ENCODE measurements at regions of chr1 and their contacts with region 1.

Region 1: DNA sequence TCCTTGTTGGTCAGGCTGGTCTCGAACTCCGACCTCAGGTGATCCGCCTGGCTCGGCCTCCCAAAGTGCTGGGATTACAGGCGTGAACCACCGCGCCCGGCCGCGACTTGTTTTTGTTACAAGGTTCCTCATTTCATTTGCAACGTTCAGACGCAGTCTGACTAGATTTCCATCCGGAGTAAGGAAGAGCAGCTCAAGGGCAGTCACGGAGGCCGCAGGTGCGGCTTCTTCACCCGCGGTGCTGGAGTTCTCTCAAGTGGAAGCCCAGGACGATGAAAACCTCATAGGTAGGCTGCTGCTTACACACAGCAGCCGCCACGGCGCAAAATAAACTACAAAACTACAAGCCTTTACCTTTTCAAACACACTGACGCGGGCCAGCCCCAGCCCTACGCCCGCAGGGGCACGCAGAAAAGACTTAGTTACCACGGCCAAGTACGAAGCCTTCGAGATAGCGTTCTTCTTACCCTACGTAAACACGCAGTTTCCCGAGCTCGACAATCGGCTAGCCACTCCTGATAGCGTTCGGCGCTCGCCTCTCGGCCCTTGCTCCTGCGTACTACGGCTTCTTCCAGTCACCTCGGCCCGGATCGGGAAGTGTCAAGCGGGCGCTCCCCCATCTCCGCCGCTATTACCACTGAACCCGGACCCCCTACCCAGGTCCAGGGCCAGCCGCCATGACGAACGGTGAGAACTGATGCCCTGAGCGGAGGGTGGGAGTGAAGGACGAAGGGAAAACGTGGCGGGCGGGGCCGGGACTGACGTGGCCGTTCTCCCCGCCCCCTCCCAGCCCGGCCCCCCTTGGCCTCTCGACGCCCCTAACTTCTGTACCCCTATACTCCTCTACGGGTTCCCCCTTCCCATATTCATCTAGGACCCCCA is at the start of gene TMEM167B:
- DNase-seq: peak; percentile 95
- H3K4me3 Mint-ChIP-seq: peak within 1 kb of the TSS; percentile 82
- H3K27ac Mint-ChIP-seq: peak within 1 kb of the TSS; percentile 87
- H3K4me1 Mint-ChIP-seq: peaks cover 29% of the 10 kb centered on the region
- H3K27me3 Mint-ChIP-seq: no peaks in the 10 kb centered on the region
- total RNA-seq, gene TMEM167B: 35.0 to 37.6 TPM

Region 2: DNA sequence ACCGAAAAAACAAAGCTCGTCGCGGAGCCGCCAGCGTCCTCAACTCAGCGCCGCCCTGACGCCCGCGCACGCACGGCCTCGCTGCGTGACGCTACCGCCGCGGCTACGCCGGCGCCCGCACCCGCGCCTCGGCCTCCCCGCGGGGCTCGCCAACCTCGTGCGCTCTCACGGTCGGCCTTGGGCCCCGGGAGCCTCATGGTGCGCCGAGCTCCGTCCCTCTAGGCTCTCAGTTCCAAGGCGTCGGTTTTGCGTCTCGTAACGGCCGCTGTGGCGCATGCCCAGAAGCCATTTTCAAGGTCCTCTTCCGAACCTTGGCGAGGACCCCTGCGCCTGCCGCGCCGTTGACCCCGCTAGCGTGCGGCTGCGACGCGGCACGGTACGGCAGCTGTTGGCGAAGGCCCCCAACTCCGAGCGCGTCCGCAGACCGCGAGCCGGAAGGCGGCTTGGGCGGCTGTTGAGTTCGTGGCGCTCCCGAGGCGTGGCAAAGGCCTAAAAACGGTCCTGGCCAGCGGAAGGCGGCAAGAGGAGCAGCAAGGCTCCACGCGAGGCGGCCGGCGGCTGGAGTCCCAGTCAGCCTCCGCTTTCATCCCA is 429.3 kb before region 1 on chr1 and contains the start of gene HENMT1:
- CTCF ChIA-PET with region 1: no interaction called
- intact Hi-C with region 1: loop called (anchors 5 kb)
- DNase-seq: peak; percentile 78
- H3K4me3 Mint-ChIP-seq: peak within 1 kb of the TSS; percentile 84
- H3K27ac Mint-ChIP-seq: peak within 1 kb of the TSS; percentile 94
- H3K4me1 Mint-ChIP-seq: peaks cover 25% of the 10 kb centered on the region
- H3K27me3 Mint-ChIP-seq: no peaks in the 10 kb centered on the region
- total RNA-seq, gene HENMT1: 18.7 to 19.3 TPM

Region 3: GRCh38 chr1:108877348-108878159 is 212.9 kb before region 1 on chr1:
- CTCF ChIA-PET with region 1: no interaction called
- intact Hi-C with region 1: loop called (anchors 5 kb)
- DNase-seq: no peak
- H3K4me3 Mint-ChIP-seq: peak overlapping the region; percentile 89
- H3K27ac Mint-ChIP-seq: no peak overlapping the region
- H3K4me1 Mint-ChIP-seq: peaks cover 4% of the 10 kb centered on the region
- H3K27me3 Mint-ChIP-seq: peaks cover 25% of the 10 kb centered on the region

Region 4: DNA sequence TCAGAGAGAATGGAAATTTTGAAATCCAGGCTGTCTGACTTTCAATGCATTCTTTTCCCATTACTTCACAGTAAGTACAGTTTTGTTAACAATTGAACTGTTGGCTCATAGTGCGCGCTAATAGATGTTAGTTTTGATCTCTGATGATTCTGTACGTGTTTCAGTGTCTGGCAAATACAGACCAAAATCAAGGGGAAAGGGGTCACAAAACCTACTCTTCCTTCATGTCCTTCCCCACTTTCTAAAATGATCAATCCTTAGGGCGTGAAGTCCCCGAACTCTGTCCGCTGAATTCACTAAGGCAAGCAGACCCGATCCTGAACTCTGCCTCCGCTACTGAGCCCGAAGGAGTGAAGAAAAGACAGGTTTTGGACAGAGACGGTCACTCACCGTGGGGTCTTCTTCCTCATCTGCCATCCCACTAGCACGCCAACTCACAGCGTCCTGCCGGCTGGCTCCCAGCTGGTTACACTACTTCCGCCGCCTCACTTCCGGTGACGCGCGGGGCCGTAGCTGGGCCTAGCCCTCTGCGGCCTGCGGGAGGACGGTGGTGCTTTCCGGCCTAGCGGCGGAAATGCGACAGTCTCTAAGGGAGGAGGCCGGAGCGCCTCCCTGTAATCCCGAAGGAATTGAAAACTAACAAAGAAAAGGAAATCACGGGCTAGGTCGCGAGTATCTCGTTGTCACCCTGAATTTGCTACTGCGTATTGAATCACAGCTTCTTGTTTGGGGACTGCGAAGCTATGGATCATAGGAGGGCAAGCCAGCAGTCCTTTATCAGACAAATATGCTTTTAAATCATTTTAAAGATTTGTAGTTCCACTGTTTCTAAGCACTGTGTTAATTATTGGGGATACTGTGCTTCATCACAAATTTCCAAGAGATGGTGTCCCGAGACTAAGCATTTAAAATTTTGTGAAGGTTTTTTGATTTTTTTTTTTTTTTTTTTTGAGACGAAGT is 14.6 kb before region 1 on chr1 and contains the start of gene TAF13:
- CTCF ChIA-PET with region 1: interaction called, 3 read pairs
- intact Hi-C with region 1: loop called (anchors 1 kb)
- DNase-seq: peak; percentile 90
- H3K4me3 Mint-ChIP-seq: peak within 1 kb of the TSS; percentile 95
- H3K27ac Mint-ChIP-seq: peak within 1 kb of the TSS; percentile 95
- H3K4me1 Mint-ChIP-seq: peaks cover 16% of the 10 kb centered on the region
- H3K27me3 Mint-ChIP-seq: no peaks in the 10 kb centered on the region
- total RNA-seq, gene TAF13: 20.1 to 23.7 TPM

Region 5: GRCh38 chr1:109426278-109427170 is 336.1 kb after region 1 on chr1 and contains the start of gene PSMA5:
- CTCF ChIA-PET with region 1: no interaction called
- intact Hi-C with region 1: loop called (anchors 2 kb)
- DNase-seq: peak; percentile 98
- H3K4me3 Mint-ChIP-seq: peak within 1 kb of the TSS; percentile 94
- H3K27ac Mint-ChIP-seq: peak within 1 kb of the TSS; percentile 97
- H3K4me1 Mint-ChIP-seq: peaks cover 33% of the 10 kb centered on the region
- H3K27me3 Mint-ChIP-seq: no peaks in the 10 kb centered on the region
- total RNA-seq, gene PSMA5: 181 to 202 TPM